Spleen (tissue), 13 donors: ENCODE measurements at regions of chr1 and their contacts with region 1.

Region 1: DNA sequence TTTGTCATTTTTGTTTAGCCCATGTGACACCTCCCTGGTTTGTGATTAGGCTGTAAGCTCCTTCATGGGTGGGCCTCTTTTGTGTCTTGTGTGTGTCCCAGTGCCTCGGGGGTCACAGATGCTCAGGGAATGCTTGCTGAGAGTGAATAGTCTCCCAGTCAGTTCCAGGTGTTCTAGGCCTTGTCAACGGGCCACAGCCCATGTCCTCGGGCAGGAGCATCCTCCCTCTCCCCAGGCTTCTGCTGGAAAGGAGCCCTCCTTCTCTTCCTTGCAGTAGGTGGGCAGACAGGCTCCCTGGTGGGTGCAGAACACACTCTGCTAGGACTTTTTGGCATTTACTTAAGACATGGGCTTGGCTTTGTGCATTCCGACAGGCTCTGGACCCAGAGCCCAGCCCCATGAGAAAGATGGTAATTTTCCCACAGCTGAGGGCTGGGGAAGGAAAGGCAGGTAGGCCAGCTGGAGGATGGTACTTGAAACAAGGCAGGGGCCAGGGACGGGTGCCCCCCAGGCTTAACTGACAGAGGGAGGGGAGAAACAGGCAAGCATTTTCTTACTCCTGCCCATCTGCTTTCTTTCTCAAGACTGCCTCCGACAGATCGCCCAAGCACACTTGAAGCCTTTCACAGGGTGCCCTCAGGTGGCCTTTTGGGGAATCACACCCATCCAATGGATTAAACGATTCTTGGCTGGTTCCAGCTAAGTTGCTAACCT is 7.1 kb upstream of the CPLANE2 start:
- DNase-seq: no peak
- H3K4me3 ChIP-seq: no peak overlapping the region
- H3K27ac ChIP-seq: peak overlapping the region in 1 of 8 donors; percentile 9
- H3K4me1 ChIP-seq: peaks cover 8 to 30% (median 14%) of the 10 kb centered on the region in 6 donors
- H3K27me3 ChIP-seq: no peaks in the 10 kb centered on the region
- CTCF ChIP-seq: peak; percentile 59 to 90 (median 84)
- POLR2A ChIP-seq: no peak

Region 2: DNA sequence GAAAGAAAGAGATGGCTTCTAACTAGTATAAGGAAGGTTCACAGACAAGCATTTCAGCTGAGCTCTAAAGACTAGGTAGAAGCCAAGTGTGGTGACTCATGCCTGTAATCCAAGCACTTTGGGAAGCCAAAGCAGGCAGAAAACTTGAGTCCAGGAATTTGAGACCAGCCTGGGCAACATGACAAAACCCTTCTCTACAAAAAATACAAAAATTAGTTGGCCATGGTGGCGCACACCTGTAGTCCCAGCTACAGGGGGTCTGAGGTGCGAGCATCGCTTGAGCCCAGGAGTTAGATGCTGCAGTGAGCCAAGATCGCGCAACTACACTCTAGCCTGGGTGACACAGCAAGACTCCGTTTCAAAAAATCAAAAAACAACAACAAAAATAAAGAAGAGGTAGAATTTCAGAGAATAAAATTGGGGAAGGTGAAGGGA is 80.4 kb after region 1 on chr1:
- intact Hi-C with region 1: no loop called
- DNase-seq: no peak
- H3K4me3 ChIP-seq: no peak overlapping the region
- H3K27ac ChIP-seq: no peak overlapping the region
- H3K4me1 ChIP-seq: peaks cover 0 to 52% (median 17%) of the 10 kb centered on the region in 6 donors
- H3K27me3 ChIP-seq: no peaks in the 10 kb centered on the region
- CTCF ChIP-seq: no peak
- POLR2A ChIP-seq: no peak

Region 3: GRCh38 chr1:16351994-16352841 is 108.1 kb after region 1 on chr1 and contains the start of gene FBXO42:
- intact Hi-C with region 1: loop called (anchors 10 kb)
- DNase-seq: peak; percentile 97
- H3K4me3 ChIP-seq: peak within 1 kb of the TSS; percentile 75 to 95 (median 80)
- H3K27ac ChIP-seq: peak within 1 kb of the TSS; percentile 83 to 98 (median 93)
- H3K4me1 ChIP-seq: peaks cover 23 to 58% (median 42%) of the 10 kb centered on the region in 6 donors
- H3K27me3 ChIP-seq: no peaks in the 10 kb centered on the region
- CTCF ChIP-seq: peak in 9 of 11 experiments; percentile 25 to 79 (median 63)
- POLR2A ChIP-seq: peak in 2 of 3 donors; percentile 10 to 79
- total RNA-seq, gene FBXO42: 18.7 to 30.2 (median 23.7) TPM

Region 4: GRCh38 chr1:16521288-16521583 is 277.1 kb after region 1 on chr1:
- intact Hi-C with region 1: no loop called
- DNase-seq: no peak
- H3K4me3 ChIP-seq: peak overlapping the region in 2 of 8 donors; percentile 18 to 49
- H3K27ac ChIP-seq: peak overlapping the region in 1 of 8 donors; percentile 1
- H3K4me1 ChIP-seq: peaks cover 0 to 3% (median 0%) of the 10 kb centered on the region in 6 donors
- H3K27me3 ChIP-seq: peaks cover 0 to 38% (median 6%) of the 10 kb centered on the region in 7 donors
- CTCF ChIP-seq: no peak
- POLR2A ChIP-seq: no peak